Adrenal gland (tissue), 19 donors: ENCODE measurements at regions of chr6 and their contacts with region 1.

Region 1: DNA sequence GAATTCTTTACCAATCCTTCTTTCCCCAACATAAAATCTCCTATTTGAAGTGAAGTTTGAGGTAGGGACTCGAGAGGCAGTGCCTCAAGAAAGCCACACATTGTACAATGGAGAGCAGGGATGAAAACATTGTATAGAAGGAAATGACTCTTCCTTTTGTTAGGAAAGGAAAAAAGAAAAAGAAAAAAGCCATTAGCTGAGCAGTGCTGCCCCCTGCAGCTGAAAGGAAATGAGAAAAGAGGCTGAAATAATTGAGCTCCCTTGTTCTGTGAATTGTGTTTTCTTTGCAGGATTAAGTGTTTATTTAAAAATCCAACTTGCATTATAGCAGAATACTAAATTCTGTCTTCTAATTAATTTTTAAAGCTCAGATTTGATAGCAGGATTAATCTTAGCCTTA is 162.9 kb upstream of the SASH1 start:
- DNase-seq: peak in 1 of 7 donors; percentile 18
- H3K4me3 ChIP-seq: no peak overlapping the region
- H3K27ac ChIP-seq: no peak overlapping the region
- H3K4me1 ChIP-seq: no peaks in the 10 kb centered on the region
- H3K27me3 ChIP-seq: peaks cover 5% of the 10 kb centered on the region
- CTCF ChIP-seq: peak; percentile 13 to 53 (median 34)
- POLR2A ChIP-seq: no peak

Region 2: DNA sequence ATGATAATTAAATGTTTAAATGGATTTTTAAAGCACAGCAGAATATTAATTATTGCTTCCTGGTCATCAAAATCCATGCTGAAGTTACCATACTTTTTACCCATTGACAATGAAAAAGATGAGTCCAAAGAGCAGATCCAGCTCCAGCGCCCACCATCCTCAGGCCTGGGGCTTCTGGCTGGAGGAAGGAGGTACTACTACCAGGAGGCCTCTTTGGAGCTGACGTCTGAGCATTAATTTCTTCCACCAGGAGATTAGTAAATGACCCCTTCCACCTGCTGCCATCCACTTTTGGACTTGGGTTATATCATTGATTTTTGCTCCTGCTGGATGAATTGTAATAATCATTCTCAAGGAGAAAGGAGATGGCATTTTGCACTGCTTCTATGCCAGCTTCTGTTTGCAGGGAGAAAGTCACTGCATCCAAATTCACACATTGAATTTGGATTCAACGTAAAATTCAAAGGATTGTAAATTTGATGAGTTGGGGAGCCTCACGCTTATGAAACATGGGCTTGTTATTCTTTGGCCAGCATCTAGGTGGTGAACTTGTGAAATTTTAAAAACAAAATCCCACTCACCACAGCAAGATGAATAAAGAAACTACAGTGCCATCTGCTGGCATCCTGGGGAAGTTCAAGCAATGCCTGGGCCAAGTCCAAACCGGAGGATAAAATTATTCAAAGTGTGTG is 284.7 kb after region 1 on chr6:
- intact Hi-C with region 1: loop called (anchors 5 to 10 kb)
- DNase-seq: peak; percentile 37 to 88 (median 59)
- H3K4me3 ChIP-seq: no peak overlapping the region
- H3K27ac ChIP-seq: no peak overlapping the region
- H3K4me1 ChIP-seq: peaks cover 0 to 18% of the 10 kb centered on the region in 2 donors
- H3K27me3 ChIP-seq: no peaks in the 10 kb centered on the region
- CTCF ChIP-seq: peak; percentile 75 to 92 (median 86)
- POLR2A ChIP-seq: no peak